ENCODE measurements at regions of chr3 and their contacts with region 1.

Region 1: GRCh38 chr3:46488735-46489361 is 8.9 kb upstream of the RTP3 start:
- DNase-seq: peak; percentile 97
- ATAC-seq: peak; percentile 99
- H3K4me3 Mint-ChIP-seq: peak overlapping the region; percentile 26
- H3K27ac Mint-ChIP-seq: no peak overlapping the region
- H3K4me1 Mint-ChIP-seq: peaks cover 8% of the 10 kb centered on the region
- H3K27me3 Mint-ChIP-seq: no peaks in the 10 kb centered on the region
- CTCF ChIP-seq: peak; percentile 100

Region 2: GRCh38 chr3:46469680-46470357 is 19.0 kb before region 1 on chr3:
- CTCF ChIA-PET with region 1: interaction called, 47 read pairs
- POLR2A ChIA-PET with region 1: no interaction called
- intact Hi-C with region 1: no loop called
- DNase-seq: no peak
- ATAC-seq: no peak
- H3K4me3 Mint-ChIP-seq: no peak overlapping the region
- H3K27ac Mint-ChIP-seq: no peak overlapping the region
- H3K4me1 Mint-ChIP-seq: no peaks in the 10 kb centered on the region
- H3K27me3 Mint-ChIP-seq: peaks cover 17% of the 10 kb centered on the region
- CTCF ChIP-seq: no peak

Region 3: DNA sequence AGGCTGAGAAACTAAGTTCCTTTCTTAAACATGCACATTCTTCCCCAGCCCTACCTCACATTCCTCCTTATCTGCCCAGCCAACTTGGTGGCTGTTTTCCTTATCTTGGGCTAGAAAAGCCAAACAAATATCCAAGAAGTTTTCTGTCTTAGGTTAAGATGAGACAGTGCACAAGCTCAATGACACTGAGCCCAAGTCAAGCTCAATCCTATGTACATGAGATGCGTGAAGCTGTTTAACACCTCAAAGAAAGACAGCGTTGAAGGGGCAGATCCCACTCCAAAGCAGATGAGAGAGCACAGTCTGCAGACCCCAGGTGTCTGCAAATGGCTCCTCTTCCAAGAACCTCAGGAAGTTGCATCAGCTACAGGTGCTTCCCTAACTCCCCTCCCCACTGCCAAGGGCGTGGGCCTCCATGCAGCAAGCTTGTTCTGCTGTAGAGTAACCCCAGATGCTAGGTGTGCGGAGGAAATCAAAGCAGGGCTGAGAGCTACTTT is 60.6 kb after region 1 on chr3:
- CTCF ChIA-PET with region 1: interaction called, 40 read pairs
- POLR2A ChIA-PET with region 1: no interaction called
- intact Hi-C with region 1: no loop called
- DNase-seq: no peak
- ATAC-seq: peak; percentile 30
- H3K4me3 Mint-ChIP-seq: no peak overlapping the region
- H3K27ac Mint-ChIP-seq: peak overlapping the region; percentile 40
- H3K4me1 Mint-ChIP-seq: peaks cover 19% of the 10 kb centered on the region
- H3K27me3 Mint-ChIP-seq: no peaks in the 10 kb centered on the region
- CTCF ChIP-seq: no peak

Region 4: GRCh38 chr3:46585799-46586693 is 97.2 kb after region 1 on chr3:
- CTCF ChIA-PET with region 1: interaction called, 14 read pairs
- POLR2A ChIA-PET with region 1: no interaction called
- intact Hi-C with region 1: no loop called
- DNase-seq: no peak
- ATAC-seq: no peak
- H3K4me3 Mint-ChIP-seq: no peak overlapping the region
- H3K27ac Mint-ChIP-seq: no peak overlapping the region
- H3K4me1 Mint-ChIP-seq: peaks cover 2% of the 10 kb centered on the region
- H3K27me3 Mint-ChIP-seq: peaks cover 2% of the 10 kb centered on the region
- CTCF ChIP-seq: no peak

Region 5: DNA sequence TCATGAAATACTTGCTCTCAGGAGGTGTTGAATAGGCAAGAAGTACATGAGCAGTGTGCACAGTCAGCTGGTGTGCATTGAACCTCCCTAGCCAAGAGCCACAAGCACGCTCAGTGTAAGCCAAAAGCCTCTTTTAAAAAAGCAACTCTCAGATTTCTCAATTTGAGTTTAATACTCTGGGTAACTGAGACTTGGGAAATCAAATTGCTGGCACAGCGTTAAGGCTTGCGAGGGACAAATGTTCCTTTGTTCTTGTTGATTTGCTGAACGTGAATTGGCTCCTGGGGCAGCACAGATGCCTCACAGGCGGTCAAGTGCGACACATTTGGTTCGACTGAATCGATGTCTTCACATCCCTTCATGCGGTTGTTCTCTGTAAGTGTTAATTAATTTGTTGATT is 123.5 kb after region 1 on chr3 and contains the start of gene FAM240A:
- CTCF ChIA-PET with region 1: interaction called, 10 read pairs
- POLR2A ChIA-PET with region 1: no interaction called
- intact Hi-C with region 1: no loop called
- DNase-seq: no peak
- ATAC-seq: no peak
- H3K4me3 Mint-ChIP-seq: no peak within 1 kb of the TSS
- H3K27ac Mint-ChIP-seq: no peak within 1 kb of the TSS
- H3K4me1 Mint-ChIP-seq: no peaks in the 10 kb centered on the region
- H3K27me3 Mint-ChIP-seq: peaks cover 15% of the 10 kb centered on the region
- CTCF ChIP-seq: no peak
- total RNA-seq, gene FAM240A: not detected

Region 6: GRCh38 chr3:46642971-46643370 is 154.1 kb after region 1 on chr3:
- CTCF ChIA-PET with region 1: interaction called, 13 read pairs
- POLR2A ChIA-PET with region 1: interaction called, 4 read pairs
- intact Hi-C with region 1: no loop called
- DNase-seq: no peak
- ATAC-seq: no peak
- H3K4me3 Mint-ChIP-seq: no peak overlapping the region
- H3K27ac Mint-ChIP-seq: no peak overlapping the region
- H3K4me1 Mint-ChIP-seq: no peaks in the 10 kb centered on the region
- H3K27me3 Mint-ChIP-seq: peaks cover 13% of the 10 kb centered on the region
- CTCF ChIP-seq: no peak